Activated CD4-positive, alpha-beta T cell treated with anti-CD3 and anti-CD28 coated beads for 36 hours (primary cell): ENCODE measurements at regions of chr3 and their contacts with region 1.

Region 1: DNA sequence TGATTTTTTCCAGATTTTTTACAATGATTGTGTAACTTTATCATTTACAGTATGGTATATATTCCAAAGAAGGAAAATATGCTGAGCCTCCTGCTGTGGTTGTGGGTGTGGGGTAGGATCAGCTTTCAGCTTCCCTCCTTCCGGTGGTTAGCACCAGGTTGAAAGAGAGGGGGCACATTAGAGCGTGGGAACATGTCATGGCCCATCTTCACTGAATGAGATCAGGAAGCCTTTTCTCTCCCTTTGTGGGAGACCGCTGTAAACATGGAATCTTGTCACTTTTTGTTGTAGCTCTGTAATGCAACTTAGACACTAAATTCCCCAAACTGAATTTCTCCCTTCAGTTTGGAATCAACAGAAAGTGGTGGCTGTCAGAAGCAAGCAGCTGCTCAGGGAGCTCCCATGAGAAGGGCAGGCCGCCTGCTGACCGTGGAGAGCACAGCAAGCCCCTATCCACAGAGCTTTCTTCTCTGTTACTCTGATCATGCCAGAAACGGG is 86.7 kb upstream of the LIMD1 start:
- DNase-seq: no peak
- ATAC-seq: no peak
- H3K4me3 Mint-ChIP-seq: no peak overlapping the region
- H3K27ac Mint-ChIP-seq: no peak overlapping the region
- H3K4me1 Mint-ChIP-seq: peaks cover 13% of the 10 kb centered on the region
- H3K27me3 Mint-ChIP-seq: no peaks in the 10 kb centered on the region

Region 2: DNA sequence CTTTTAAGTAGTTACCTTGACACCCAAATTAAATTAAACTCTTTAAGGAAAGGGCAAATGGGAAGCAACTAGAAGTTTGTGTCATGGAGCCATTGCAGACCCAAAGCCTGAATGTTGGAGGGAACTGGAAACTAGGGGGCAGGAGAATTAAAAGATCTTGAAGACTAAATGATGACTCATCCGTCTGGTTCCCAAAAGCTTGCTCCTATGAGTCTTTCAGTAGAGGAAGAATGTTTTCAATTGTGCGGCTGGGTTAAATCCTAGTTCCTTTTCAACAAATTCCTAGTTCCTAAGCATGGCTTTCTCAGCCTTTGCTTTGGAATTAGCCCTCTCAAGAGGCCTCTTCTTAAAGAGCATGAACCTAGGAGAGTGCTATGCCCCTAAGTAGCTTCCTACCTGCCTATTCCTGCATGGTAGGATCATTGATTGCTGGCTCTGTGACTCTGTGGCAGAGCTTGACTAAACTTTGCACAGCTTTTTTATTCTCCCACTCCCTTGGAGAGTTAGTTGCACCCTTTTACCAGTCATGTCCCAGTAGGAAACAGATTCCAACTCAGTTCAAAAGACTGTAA is 464.1 kb before region 1 on chr3:
- CTCF ChIA-PET with region 1: interaction called, 14 read pairs
- POLR2A ChIA-PET with region 1: no interaction called
- intact Hi-C with region 1: loop called in 1 of 2 experiments (anchors 5 kb)
- DNase-seq: no peak
- ATAC-seq: no peak
- H3K4me3 Mint-ChIP-seq: no peak overlapping the region
- H3K27ac Mint-ChIP-seq: no peak overlapping the region
- H3K4me1 Mint-ChIP-seq: peaks cover 23% of the 10 kb centered on the region
- H3K27me3 Mint-ChIP-seq: peaks cover 3% of the 10 kb centered on the region

Region 3: DNA sequence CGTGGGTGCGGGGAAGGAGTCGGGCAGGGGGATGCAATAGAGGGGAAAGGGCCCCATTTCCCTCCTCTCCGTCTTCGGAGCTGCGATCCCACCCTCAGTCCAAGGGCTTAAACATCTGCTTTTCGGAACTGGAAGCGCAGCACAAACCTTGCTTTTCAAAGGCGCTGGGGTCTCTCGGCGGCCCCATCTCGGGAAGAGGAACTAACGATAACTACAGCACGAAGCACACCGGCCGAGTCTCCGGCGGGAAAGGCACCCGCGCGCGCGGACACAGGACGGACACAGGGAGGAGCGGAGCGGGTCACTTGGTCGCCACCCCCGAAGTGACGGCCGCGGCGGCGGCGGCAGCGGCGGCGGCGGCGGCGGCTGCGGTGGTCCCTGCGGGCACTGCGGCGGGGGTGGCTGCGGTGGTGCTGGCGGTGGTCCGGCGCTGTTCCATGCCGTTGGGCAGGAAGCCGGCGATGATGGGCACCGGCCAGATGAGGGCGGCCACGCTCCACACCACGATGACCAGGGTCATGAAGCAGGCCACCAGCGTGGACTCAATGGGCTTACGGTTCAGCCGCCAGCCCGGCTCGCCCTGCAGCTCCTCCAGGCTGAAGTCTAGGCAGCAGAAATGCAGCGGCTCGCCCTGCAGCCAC is 282.9 kb before region 1 on chr3:
- CTCF ChIA-PET with region 1: interaction called, 4 read pairs
- POLR2A ChIA-PET with region 1: no interaction called
- intact Hi-C with region 1: loop called in 1 of 2 experiments (anchors 5 kb)
- DNase-seq: peak; percentile 60
- ATAC-seq: no peak
- H3K4me3 Mint-ChIP-seq: peak overlapping the region; percentile 73
- H3K27ac Mint-ChIP-seq: no peak overlapping the region
- H3K4me1 Mint-ChIP-seq: peaks cover 13% of the 10 kb centered on the region
- H3K27me3 Mint-ChIP-seq: peaks cover 62% of the 10 kb centered on the region

Region 4: GRCh38 chr3:45546716-45547701 is 39.1 kb after region 1 on chr3:
- CTCF ChIA-PET with region 1: interaction called, 16 read pairs
- POLR2A ChIA-PET with region 1: no interaction called
- intact Hi-C with region 1: loop called in 1 of 2 experiments (anchors 5 kb)
- DNase-seq: peak; percentile 75
- ATAC-seq: peak; percentile 39
- H3K4me3 Mint-ChIP-seq: no peak overlapping the region
- H3K27ac Mint-ChIP-seq: no peak overlapping the region
- H3K4me1 Mint-ChIP-seq: peaks cover 5% of the 10 kb centered on the region
- H3K27me3 Mint-ChIP-seq: no peaks in the 10 kb centered on the region

Region 5: DNA sequence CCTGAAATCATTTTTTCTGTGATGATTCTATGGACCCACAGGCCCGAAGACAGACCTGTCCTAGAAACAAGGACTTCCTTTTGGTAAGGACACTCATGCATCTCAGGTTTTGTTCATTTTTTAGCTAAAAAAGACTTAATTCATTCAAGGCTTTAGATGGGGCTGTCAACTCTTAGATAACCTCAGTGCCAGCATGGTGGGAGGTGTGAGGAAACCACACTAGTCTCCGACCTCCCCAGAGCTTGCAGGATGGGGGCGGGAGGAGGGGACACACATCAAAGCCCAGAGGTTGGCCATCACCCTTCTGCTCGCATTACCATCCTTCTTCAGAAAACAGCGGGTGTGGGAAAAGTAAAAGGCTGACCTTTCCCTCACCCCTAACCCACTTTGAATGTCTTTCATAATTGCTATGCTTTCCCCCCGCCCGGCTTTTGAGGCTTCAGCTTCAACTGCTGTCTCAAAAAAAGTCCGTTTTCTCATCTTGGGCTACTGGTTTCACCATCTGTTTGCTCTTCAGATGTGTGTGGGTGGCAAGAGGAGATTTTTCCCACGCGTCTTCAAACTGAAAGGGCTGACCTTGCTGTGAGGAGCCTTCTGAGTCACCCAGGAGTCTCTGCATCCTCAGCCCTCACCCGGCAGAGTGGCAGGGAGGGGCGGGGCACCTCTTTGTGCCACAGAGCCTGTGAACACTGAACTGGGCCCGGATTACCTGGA is 407.8 kb after region 1 on chr3:
- CTCF ChIA-PET with region 1: interaction called, 5 read pairs
- POLR2A ChIA-PET with region 1: no interaction called
- intact Hi-C with region 1: loop called in 1 of 2 experiments (anchors 5 kb)
- DNase-seq: peak; percentile 88
- ATAC-seq: peak; percentile 94
- H3K4me3 Mint-ChIP-seq: peak overlapping the region; percentile 22
- H3K27ac Mint-ChIP-seq: peak overlapping the region; percentile 37
- H3K4me1 Mint-ChIP-seq: peaks cover 33% of the 10 kb centered on the region
- H3K27me3 Mint-ChIP-seq: peaks cover 33% of the 10 kb centered on the region